ENCODE measurements at regions of chr6 and their contacts with region 1.

Region 1: DNA sequence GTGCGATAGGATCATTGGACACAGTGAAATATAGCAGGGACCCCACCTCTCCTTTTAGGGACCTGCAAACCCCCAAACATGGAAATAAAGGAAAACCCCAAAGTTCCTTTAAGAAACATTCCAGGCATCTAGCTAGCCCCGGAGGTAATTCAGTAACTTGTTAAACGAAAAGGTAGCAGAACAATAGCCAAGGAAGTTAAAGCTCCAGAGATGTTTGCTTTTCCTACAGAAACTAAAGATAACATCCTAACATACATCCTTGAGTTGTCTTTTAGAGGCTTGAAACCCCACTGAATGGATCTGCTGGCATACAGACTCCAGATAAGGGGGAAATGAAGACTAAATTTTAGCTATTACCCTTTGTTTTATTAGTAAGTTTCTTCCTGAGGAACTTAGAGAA is 51.0 kb downstream of the FAM184A start:
- DNase-seq: no peak
- H3K4me3 ChIP-seq: no peak overlapping the region
- H3K27ac ChIP-seq: no peak overlapping the region
- H3K4me1 ChIP-seq: no peaks in the 10 kb centered on the region
- H3K27me3 ChIP-seq: no peaks in the 10 kb centered on the region
- CTCF ChIP-seq: no peak
- POLR2A ChIP-seq: no peak

Region 2: GRCh38 chr6:118419448-118420394 is 607.7 kb before region 1 on chr6:
- intact Hi-C with region 1: no loop called
- DNase-seq: no peak
- H3K4me3 ChIP-seq: no peak overlapping the region
- H3K27ac ChIP-seq: no peak overlapping the region
- H3K4me1 ChIP-seq: no peaks in the 10 kb centered on the region
- H3K27me3 ChIP-seq: no peaks in the 10 kb centered on the region
- CTCF ChIP-seq: no peak
- POLR2A ChIP-seq: no peak

Region 3: GRCh38 chr6:118999494-119000040 is 27.9 kb before region 1 on chr6:
- intact Hi-C with region 1: loop called (anchors 2 kb)
- DNase-seq: no peak
- H3K4me3 ChIP-seq: no peak overlapping the region
- H3K27ac ChIP-seq: no peak overlapping the region
- H3K4me1 ChIP-seq: no peaks in the 10 kb centered on the region
- H3K27me3 ChIP-seq: no peaks in the 10 kb centered on the region
- CTCF ChIP-seq: no peak
- POLR2A ChIP-seq: no peak

Region 4: DNA sequence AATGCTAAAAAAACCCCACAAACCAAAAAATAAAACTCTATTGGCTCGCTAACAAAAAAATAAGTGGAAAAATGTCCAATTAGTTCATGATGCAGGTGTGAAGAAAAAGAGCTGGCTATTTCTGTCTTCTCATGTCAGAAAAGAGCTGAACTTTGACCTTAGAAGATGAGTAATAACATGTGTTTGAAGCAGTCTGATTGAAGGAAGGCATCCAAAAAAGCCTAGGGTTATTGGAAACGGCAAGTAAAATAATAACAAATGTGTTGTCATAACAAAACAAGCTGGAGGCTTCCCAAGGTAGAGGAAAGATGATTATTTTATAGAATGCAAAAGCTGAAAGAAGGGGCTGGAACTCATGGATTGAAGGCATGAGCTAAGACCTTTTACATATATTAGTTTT is 145.4 kb after region 1 on chr6:
- intact Hi-C with region 1: no loop called
- DNase-seq: no peak
- H3K4me3 ChIP-seq: no peak overlapping the region
- H3K27ac ChIP-seq: no peak overlapping the region
- H3K4me1 ChIP-seq: peaks cover 12% of the 10 kb centered on the region
- H3K27me3 ChIP-seq: no peaks in the 10 kb centered on the region
- CTCF ChIP-seq: no peak
- POLR2A ChIP-seq: no peak

Region 5: DNA sequence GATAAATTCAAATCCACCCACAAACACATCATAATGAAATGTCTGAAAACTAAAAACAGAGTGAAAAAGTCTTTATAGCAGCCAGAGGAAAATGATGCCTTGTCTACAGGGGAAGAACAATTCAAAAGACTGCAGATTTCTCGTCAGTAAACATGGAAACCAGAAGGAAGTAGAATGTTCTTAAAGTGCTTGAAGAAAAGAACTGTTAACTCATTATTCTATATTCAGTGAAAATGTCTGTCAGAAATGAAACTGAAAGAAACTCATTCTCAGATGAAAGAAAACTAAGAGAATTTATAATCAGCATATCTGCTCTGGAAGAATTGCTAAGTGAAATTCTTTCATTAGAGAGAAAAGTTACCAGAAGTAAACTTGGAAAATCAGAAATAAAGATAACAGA is 1890.7 kb after region 1 on chr6:
- intact Hi-C with region 1: no loop called
- DNase-seq: no peak
- H3K4me3 ChIP-seq: no peak overlapping the region
- H3K27ac ChIP-seq: no peak overlapping the region
- H3K4me1 ChIP-seq: no peaks in the 10 kb centered on the region
- H3K27me3 ChIP-seq: no peaks in the 10 kb centered on the region
- CTCF ChIP-seq: no peak
- POLR2A ChIP-seq: no peak